Mammary epithelial cell (primary cell): ENCODE measurements at regions of chr14 and their contacts with region 1.

Region 1: GRCh38 chr14:36604757-36605505 is 22.5 kb upstream of the NKX2-8 start:
- DNase-seq: peak; percentile 66
- H3K4me3 ChIP-seq: no peak overlapping the region
- H3K27ac ChIP-seq: no peak overlapping the region
- H3K4me1 ChIP-seq: no peaks in the 10 kb centered on the region
- H3K27me3 ChIP-seq: no peaks in the 10 kb centered on the region
- CTCF ChIP-seq: peak; percentile 82 to 87

Region 2: GRCh38 chr14:35883677-35884293 is 721.1 kb before region 1 on chr14:
- CTCF ChIA-PET with region 1: no interaction called
- dilution Hi-C with region 1: no loop called
- in situ Hi-C with region 1: no loop called
- intact Hi-C with region 1: loop called (anchors 10 kb)
- DNase-seq: no peak
- H3K4me3 ChIP-seq: no peak overlapping the region
- H3K27ac ChIP-seq: no peak overlapping the region
- H3K4me1 ChIP-seq: peaks cover 8% of the 10 kb centered on the region
- H3K27me3 ChIP-seq: no peaks in the 10 kb centered on the region
- CTCF ChIP-seq: peak; percentile 72 to 75

Region 3: GRCh38 chr14:35963209-35963608 is 641.7 kb before region 1 on chr14:
- CTCF ChIA-PET with region 1: no interaction called
- dilution Hi-C with region 1: no loop called
- in situ Hi-C with region 1: no loop called
- intact Hi-C with region 1: loop called (anchors 5 kb)
- DNase-seq: no peak
- H3K4me3 ChIP-seq: no peak overlapping the region
- H3K27ac ChIP-seq: no peak overlapping the region
- H3K4me1 ChIP-seq: no peaks in the 10 kb centered on the region
- H3K27me3 ChIP-seq: no peaks in the 10 kb centered on the region
- CTCF ChIP-seq: peak; percentile 48 to 57

Region 4: GRCh38 chr14:36105401-36105800 is 499.5 kb before region 1 on chr14:
- CTCF ChIA-PET with region 1: interaction called, 12 read pairs
- dilution Hi-C with region 1: no loop called
- in situ Hi-C with region 1: no loop called
- intact Hi-C with region 1: no loop called
- DNase-seq: no peak
- H3K4me3 ChIP-seq: no peak overlapping the region
- H3K27ac ChIP-seq: no peak overlapping the region
- H3K4me1 ChIP-seq: no peaks in the 10 kb centered on the region
- H3K27me3 ChIP-seq: peaks cover 6% of the 10 kb centered on the region
- CTCF ChIP-seq: peak in 1 of 2 donors; percentile 41

Region 5: DNA sequence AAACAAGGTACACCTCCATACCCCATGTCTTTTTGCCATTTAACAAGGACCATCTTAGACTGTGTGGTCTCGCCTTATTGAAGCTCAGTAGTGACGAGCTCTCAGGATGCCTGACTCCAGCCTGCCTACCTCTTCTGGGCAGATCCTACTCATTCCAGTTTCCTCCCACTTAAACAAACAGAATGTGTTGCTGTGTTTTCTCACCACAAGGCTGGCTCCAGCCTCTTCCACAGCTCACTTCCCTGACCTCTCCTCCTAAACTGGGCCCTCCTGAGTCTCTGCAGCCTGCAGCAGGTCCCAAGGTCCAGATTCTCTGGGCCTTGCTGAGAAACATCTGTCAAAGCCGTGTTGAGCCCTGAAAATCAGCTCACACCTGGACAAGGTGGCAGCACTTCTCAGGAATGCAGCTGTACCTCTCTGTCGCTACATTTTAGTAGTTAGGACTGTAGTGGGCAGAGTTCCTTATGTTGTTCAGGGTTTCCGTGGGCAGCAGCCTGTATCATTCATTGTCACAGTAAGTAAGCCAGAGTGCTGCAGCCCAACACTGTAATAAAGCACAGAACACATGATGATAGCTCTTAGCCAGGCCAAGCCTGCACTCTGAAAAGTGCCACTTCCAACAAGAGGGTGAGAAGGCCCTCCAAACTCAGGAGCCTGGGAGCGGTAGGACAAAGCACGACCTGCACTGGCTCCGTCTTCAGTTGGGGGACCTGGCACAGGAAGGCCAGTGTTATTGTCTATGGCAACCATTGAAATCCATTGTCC is 153.4 kb before region 1 on chr14:
- CTCF ChIA-PET with region 1: no interaction called
- dilution Hi-C with region 1: no loop called
- in situ Hi-C with region 1: no loop called
- intact Hi-C with region 1: no loop called
- DNase-seq: no peak
- H3K4me3 ChIP-seq: no peak overlapping the region
- H3K27ac ChIP-seq: no peak overlapping the region
- H3K4me1 ChIP-seq: no peaks in the 10 kb centered on the region
- H3K27me3 ChIP-seq: no peaks in the 10 kb centered on the region
- CTCF ChIP-seq: no peak